ENCODE measurements at regions of chr2 and their contacts with region 1.

Region 1: DNA sequence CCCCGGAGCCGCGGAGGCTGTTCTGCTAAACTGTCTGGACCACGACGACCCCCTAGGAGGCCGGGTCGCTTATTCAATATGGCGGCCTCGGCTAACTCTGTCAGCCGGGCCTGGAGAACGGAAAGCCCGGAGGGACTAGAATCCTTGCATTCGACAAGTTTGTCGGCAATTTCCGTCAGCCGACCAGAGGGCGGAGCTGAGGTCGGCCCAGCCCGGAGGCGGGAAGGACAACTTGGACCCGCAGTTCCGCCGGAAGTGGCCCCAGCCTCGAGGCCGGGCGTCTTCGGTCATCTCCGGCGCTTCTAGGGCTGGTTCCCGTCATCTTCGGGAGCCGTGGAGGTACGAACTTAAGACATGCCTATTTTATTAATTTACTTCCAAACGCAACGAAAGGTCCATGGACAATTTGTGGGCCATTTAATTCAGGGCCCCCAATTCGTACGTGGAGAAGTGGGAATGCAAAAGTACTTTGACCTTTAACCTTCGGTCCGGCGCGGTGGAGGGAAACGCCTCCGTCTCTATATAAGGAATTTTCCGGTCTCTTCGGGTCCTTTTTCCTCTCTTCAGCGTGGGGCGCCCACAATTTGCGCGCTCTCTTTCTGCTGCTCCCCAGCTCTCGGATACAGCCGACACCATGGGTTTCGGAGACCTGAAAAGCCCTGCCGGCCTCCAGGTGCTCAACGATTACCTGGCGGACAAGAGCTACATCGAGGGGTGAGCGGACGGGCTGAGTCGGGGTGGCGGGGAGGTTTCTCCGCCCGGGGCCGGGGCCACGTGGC is at the starts of genes EEF1B2 and NDUFS1:
- DNase-seq: peak; percentile 78 to 97 (median 84)
- ATAC-seq: peak; percentile 91
- H3K4me3 ChIP-seq: peak within 1 kb of the TSS; percentile 81
- H3K27ac ChIP-seq: peak within 1 kb of the TSS; percentile 89
- H3K4me1 ChIP-seq: peaks cover 8 to 15% of the 10 kb centered on the region in 2 experiments; a peak in 4 of 5 replicates
- H3K27me3 ChIP-seq: no peaks in the 10 kb centered on the region
- CTCF ChIP-seq: no peak
- EP300 ChIP-seq: no peak
- POLR2A ChIP-seq: peak; percentile 85
- RAD21 ChIP-seq: no peak
- polyA plus RNA-seq, gene EEF1B2: 943 to 1,148 TPM
- polyA plus RNA-seq, gene NDUFS1: 75.0 to 116 TPM

Region 2: GRCh38 chr2:206004004-206004693 is 155.4 kb before region 1 on chr2:
- CTCF ChIA-PET with region 1: interaction called, 5 read pairs
- POLR2A ChIA-PET with region 1: no interaction called
- in situ Hi-C with region 1: no loop called
- intact Hi-C with region 1: loop called (anchors 5 kb)
- DNase-seq: peak; percentile 9 to 45 (median 19)
- ATAC-seq: peak; percentile 90
- H3K4me3 ChIP-seq: no peak overlapping the region
- H3K27ac ChIP-seq: no peak overlapping the region
- H3K4me1 ChIP-seq: no peaks in the 10 kb centered on the region
- H3K27me3 ChIP-seq: no peaks in the 10 kb centered on the region
- CTCF ChIP-seq: peak; percentile 50 to 60 (median 54); a peak in 5 of 6 replicates
- EP300 ChIP-seq: no peak
- POLR2A ChIP-seq: no peak
- RAD21 ChIP-seq: peak; percentile 19 to 54; a peak in 3 of 4 replicates

Region 3: GRCh38 chr2:206045251-206045650 is 114.3 kb before region 1 on chr2:
- CTCF ChIA-PET with region 1: no interaction called
- POLR2A ChIA-PET with region 1: no interaction called
- in situ Hi-C with region 1: no loop called
- intact Hi-C with region 1: no loop called
- DNase-seq: no peak
- ATAC-seq: no peak
- H3K4me3 ChIP-seq: no peak overlapping the region
- H3K27ac ChIP-seq: no peak overlapping the region
- H3K4me1 ChIP-seq: no peaks in the 10 kb centered on the region
- H3K27me3 ChIP-seq: no peaks in the 10 kb centered on the region
- CTCF ChIP-seq: no peak
- EP300 ChIP-seq: no peak
- POLR2A ChIP-seq: no peak
- RAD21 ChIP-seq: no peak

Region 4: GRCh38 chr2:206085742-206086445 is 73.6 kb before region 1 on chr2 and contains the start of gene INO80D:
- CTCF ChIA-PET with region 1: no interaction called
- POLR2A ChIA-PET with region 1: interaction called, 3 read pairs
- in situ Hi-C with region 1: no loop called
- intact Hi-C with region 1: loop called (anchors 5 kb)
- DNase-seq: peak; percentile 61 to 82 (median 66)
- ATAC-seq: peak; percentile 88
- H3K4me3 ChIP-seq: peak within 1 kb of the TSS; percentile 76
- H3K27ac ChIP-seq: peak within 1 kb of the TSS; percentile 96
- H3K4me1 ChIP-seq: peaks cover 3 to 4% of the 10 kb centered on the region in 2 experiments; a peak in 3 of 5 replicates
- H3K27me3 ChIP-seq: no peaks in the 10 kb centered on the region
- CTCF ChIP-seq: peak; percentile 31 to 60 (median 43); a peak in 5 of 6 replicates
- EP300 ChIP-seq: no peak
- POLR2A ChIP-seq: peak; percentile 78
- RAD21 ChIP-seq: no peak
- polyA plus RNA-seq, gene INO80D: 0.64 to 1.4 TPM

Region 5: DNA sequence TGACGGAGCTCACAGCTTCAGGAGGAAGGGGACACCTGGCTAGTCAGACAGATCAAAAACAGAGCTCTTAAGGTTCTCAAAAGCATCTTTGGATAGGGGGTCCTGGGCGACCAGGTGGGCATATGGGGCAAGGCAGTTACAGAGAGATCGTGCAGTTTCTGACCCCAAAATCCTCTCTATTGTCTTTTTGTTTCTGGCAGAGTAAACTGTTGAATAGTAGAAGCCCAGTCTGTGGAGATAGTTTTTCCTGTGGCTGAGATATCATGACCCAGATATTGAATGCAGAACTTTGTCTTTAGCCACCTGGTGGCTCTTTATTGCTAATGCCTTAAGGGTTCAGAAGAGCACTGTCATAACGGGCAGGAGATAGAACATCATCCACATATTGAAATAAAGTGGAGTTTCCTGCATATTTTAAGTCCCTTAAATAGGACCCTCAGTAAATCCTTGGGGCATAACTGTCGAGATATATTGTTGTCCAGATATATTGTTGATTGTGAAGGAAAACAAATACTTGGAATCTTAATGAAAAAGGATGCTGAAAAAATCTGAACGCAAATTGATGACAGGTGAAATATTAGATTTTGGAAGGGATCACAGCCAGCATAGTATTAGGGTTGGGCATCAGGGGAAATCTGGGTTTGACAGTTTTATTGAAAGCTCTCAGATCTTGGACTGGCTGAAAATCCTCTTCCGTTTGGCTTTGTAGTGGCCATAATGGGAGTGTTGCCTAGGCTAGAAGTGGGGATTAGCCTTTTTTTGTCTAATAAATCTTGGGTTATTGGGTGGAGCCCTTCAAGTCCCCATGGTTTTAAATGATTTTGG is 100.9 kb after region 1 on chr2:
- CTCF ChIA-PET with region 1: no interaction called
- POLR2A ChIA-PET with region 1: no interaction called
- in situ Hi-C with region 1: no loop called
- intact Hi-C with region 1: loop called (anchors 5 kb)
- DNase-seq: peak in 3 of 4 experiments; percentile 6 to 14 (median 9)
- ATAC-seq: peak; percentile 84
- H3K4me3 ChIP-seq: no peak overlapping the region
- H3K27ac ChIP-seq: no peak overlapping the region
- H3K4me1 ChIP-seq: no peaks in the 10 kb centered on the region
- H3K27me3 ChIP-seq: peaks cover 12 to 42% of the 10 kb centered on the region in 2 experiments; a peak in 4 of 5 replicates
- CTCF ChIP-seq: peak; percentile 8 to 34 (median 18); a peak in 3 of 6 replicates
- EP300 ChIP-seq: no peak
- POLR2A ChIP-seq: no peak
- RAD21 ChIP-seq: peak; percentile 10 to 33; a peak in 1 of 4 replicates

Region 6: DNA sequence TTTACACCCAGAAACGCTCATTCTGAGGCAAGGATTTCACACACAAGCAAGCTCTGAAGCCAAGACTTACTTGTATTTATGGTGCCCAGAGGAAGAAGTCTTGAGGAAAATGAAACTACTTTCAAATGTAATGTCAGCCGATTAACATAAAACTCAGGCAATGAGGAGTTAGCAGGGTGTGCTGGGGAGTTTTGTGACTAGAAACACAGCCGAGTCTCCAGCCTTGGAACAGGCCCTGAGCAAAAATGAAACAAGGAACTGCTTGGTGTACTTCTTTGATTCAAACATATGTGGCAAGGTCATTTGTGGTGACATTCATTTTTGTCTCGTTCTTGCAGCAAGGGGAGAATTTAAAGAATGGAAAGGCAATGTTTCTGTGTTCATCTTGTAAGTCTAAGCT is 554.2 kb after region 1 on chr2:
- CTCF ChIA-PET with region 1: no interaction called
- POLR2A ChIA-PET with region 1: no interaction called
- in situ Hi-C with region 1: no loop called
- intact Hi-C with region 1: no loop called
- DNase-seq: no peak
- ATAC-seq: no peak
- H3K4me3 ChIP-seq: no peak overlapping the region
- H3K27ac ChIP-seq: no peak overlapping the region
- H3K4me1 ChIP-seq: no peaks in the 10 kb centered on the region
- H3K27me3 ChIP-seq: no peaks in the 10 kb centered on the region; a peak in 1 of 5 replicates
- CTCF ChIP-seq: no peak
- EP300 ChIP-seq: no peak
- POLR2A ChIP-seq: no peak
- RAD21 ChIP-seq: no peak